Activated CD4-positive, alpha-beta T cell treated with anti-CD3 and anti-CD28 coated beads for 36 hours (primary cell): ENCODE measurements at regions of chr7 and their contacts with region 1.

Region 1: GRCh38 chr7:75914730-75915585 is at the start of gene POR:
- DNase-seq: peak; percentile 97
- ATAC-seq: peak; percentile 89
- H3K4me3 Mint-ChIP-seq: peak within 1 kb of the TSS; percentile 80
- H3K27ac Mint-ChIP-seq: peak within 1 kb of the TSS; percentile 81
- H3K4me1 Mint-ChIP-seq: peaks cover 27% of the 10 kb centered on the region
- H3K27me3 Mint-ChIP-seq: no peaks in the 10 kb centered on the region
- total RNA-seq, gene POR: 24.9 to 33.8 TPM

Region 2: DNA sequence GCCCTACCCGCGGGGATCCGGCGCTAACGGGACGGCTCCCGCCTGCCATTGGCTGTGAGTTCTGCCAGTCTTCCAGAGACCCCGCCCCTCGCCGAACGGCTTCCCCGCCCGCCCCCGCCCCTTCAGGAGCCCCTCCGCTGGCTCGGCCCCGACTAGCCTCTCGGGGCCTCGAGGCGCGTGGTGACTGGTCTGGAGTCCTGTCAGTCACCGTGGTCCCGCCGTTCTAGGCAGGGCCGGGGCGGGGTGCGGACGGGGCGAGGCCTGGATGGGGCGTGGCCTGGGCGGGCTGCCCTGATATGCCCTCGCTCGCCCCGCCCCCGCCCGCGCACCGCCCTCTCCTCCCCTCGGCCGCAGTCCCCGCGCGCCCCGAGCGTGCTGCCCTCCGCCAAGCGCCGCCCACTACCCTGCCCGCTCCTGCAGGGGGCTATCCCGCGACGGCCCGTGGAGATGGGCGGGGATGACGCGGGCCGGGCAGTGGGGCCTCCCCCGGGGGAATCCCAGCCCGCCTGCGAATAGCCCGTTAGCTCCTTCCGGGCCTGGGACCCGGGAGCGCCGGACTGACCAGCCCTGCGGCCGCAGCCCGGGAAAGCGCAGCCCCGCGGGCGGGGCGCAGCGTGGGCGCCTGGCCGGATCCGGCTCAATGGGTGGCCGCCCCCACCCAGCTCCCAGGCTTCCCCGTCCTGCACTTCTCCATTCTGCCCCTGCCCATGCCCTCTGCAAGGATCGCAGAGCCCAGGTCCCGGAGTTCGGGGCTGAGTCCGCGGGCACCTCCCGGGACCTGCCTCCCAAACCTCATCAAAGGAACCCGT is 175.8 kb before region 1 on chr7:
- CTCF ChIA-PET with region 1: no interaction called
- POLR2A ChIA-PET with region 1: no interaction called
- intact Hi-C with region 1: loop called in 1 of 2 experiments (anchors 1 kb)
- DNase-seq: peak; percentile 100
- ATAC-seq: peak; percentile 99
- H3K4me3 Mint-ChIP-seq: peak overlapping the region; percentile 85
- H3K27ac Mint-ChIP-seq: peak overlapping the region; percentile 91
- H3K4me1 Mint-ChIP-seq: peaks cover 19% of the 10 kb centered on the region
- H3K27me3 Mint-ChIP-seq: peaks cover 10% of the 10 kb centered on the region

Region 3: DNA sequence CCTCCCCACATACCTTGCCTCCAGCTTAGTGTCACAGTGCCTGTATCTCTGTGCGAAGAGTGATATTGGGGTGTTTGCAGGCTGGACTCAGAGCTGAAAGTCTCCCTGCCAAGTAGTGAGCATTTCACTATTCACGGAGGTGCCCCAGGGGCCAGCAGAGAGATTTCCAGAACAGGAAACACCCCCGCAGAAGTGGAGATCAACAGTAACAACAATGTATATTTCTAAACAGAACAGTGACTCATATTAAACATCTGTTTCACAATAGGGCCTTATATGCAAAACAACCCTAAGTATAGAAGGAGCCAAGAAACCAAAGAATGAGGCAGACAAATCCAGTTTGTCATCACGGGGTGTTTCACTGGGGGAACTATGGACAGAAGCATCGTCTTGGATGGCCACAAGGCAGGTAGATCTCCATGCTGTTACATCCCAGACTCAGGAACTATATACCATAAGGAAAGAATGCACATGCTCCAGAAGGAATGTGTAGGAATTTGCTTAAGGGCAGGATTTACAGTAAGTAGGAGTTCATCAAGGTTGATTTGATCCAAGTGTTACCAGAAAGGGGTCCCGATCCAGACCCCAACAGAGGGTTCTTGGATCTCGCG is 72.0 kb before region 1 on chr7:
- CTCF ChIA-PET with region 1: no interaction called
- POLR2A ChIA-PET with region 1: no interaction called
- intact Hi-C with region 1: loop called in 1 of 2 experiments (anchors 2 kb)
- DNase-seq: peak; percentile 74
- ATAC-seq: peak; percentile 95
- H3K4me3 Mint-ChIP-seq: peak overlapping the region; percentile 32
- H3K27ac Mint-ChIP-seq: peak overlapping the region; percentile 87
- H3K4me1 Mint-ChIP-seq: peaks cover 14% of the 10 kb centered on the region
- H3K27me3 Mint-ChIP-seq: no peaks in the 10 kb centered on the region

Region 4: GRCh38 chr7:75878769-75879611 is 36.0 kb before region 1 on chr7 and contains the start of gene RHBDD2:
- CTCF ChIA-PET with region 1: no interaction called
- POLR2A ChIA-PET with region 1: interaction called, 6 read pairs
- intact Hi-C with region 1: loop called (anchors 1 kb)
- DNase-seq: peak; percentile 99
- ATAC-seq: peak; percentile 97
- H3K4me3 Mint-ChIP-seq: peak within 1 kb of the TSS; percentile 100
- H3K27ac Mint-ChIP-seq: peak within 1 kb of the TSS; percentile 97
- H3K4me1 Mint-ChIP-seq: peaks cover 34% of the 10 kb centered on the region
- H3K27me3 Mint-ChIP-seq: no peaks in the 10 kb centered on the region
- total RNA-seq, gene RHBDD2: 21.6 to 23.2 TPM

Region 5: GRCh38 chr7:76011442-76011861 is 96.5 kb after region 1 on chr7:
- CTCF ChIA-PET with region 1: no interaction called
- POLR2A ChIA-PET with region 1: interaction called, 3 read pairs
- intact Hi-C with region 1: loop called in 1 of 2 experiments (anchors 1 kb)
- DNase-seq: no peak
- ATAC-seq: no peak
- H3K4me3 Mint-ChIP-seq: no peak overlapping the region
- H3K27ac Mint-ChIP-seq: no peak overlapping the region
- H3K4me1 Mint-ChIP-seq: peaks cover 34% of the 10 kb centered on the region
- H3K27me3 Mint-ChIP-seq: peaks cover 3% of the 10 kb centered on the region

Region 6: DNA sequence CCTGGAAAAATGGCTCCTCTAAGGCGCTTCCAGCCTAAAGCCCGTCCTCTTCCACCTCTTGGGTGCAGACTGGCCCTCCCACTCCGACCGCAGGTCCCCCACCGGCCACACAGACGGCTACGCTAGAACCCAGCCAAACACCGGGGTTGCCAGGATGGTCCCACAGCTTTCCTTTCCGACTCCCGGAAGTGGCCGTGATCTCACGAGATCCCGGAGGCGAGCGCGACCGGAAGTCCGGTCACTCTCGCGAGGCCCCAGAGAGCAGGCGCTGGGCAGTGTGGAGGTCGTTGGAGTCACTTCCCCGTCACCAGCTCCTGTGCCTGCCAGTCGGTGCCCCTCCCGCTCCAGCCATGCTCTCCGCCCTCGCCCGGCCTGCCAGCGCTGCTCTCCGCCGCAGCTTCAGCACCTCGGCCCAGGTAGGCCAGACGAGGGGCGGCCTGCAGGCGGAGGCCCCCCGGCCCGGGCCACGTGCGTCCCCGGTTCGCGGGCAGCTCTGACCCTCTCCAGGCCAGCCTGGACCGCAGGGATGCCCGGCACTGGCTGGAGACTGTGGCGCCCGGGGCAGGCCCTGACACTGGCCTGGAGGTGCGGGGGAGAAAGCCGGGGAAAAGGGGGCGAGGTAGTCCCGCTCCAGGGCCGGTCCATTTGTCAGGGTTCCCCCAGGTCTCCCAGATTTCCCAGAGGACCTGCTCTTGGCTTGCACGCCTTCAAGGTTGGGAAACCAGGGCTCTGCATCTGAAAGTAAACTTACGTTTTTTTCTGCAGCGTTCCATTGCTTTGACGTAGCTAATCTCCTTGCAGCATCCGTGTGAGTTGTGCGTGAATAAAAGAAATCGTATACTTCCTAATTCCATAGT is 133.1 kb after region 1 on chr7 and contains the starts of genes MDH2 and STYXL1:
- CTCF ChIA-PET with region 1: no interaction called
- POLR2A ChIA-PET with region 1: interaction called, 3 read pairs
- intact Hi-C with region 1: loop called in 1 of 2 experiments (anchors 1 kb)
- DNase-seq: peak; percentile 95
- ATAC-seq: peak; percentile 96
- H3K4me3 Mint-ChIP-seq: peak within 1 kb of the TSS; percentile 92
- H3K27ac Mint-ChIP-seq: peak within 1 kb of the TSS; percentile 97
- H3K4me1 Mint-ChIP-seq: peaks cover 43% of the 10 kb centered on the region
- H3K27me3 Mint-ChIP-seq: no peaks in the 10 kb centered on the region
- total RNA-seq, gene MDH2: 257 to 328 TPM
- total RNA-seq, gene STYXL1: 47.5 to 50.5 TPM

Region 7: GRCh38 chr7:76179686-76180085 is 264.7 kb after region 1 on chr7:
- CTCF ChIA-PET with region 1: no interaction called
- POLR2A ChIA-PET with region 1: no interaction called
- intact Hi-C with region 1: no loop called
- DNase-seq: no peak
- ATAC-seq: no peak
- H3K4me3 Mint-ChIP-seq: no peak overlapping the region
- H3K27ac Mint-ChIP-seq: no peak overlapping the region
- H3K4me1 Mint-ChIP-seq: no peaks in the 10 kb centered on the region
- H3K27me3 Mint-ChIP-seq: no peaks in the 10 kb centered on the region

Region 8: DNA sequence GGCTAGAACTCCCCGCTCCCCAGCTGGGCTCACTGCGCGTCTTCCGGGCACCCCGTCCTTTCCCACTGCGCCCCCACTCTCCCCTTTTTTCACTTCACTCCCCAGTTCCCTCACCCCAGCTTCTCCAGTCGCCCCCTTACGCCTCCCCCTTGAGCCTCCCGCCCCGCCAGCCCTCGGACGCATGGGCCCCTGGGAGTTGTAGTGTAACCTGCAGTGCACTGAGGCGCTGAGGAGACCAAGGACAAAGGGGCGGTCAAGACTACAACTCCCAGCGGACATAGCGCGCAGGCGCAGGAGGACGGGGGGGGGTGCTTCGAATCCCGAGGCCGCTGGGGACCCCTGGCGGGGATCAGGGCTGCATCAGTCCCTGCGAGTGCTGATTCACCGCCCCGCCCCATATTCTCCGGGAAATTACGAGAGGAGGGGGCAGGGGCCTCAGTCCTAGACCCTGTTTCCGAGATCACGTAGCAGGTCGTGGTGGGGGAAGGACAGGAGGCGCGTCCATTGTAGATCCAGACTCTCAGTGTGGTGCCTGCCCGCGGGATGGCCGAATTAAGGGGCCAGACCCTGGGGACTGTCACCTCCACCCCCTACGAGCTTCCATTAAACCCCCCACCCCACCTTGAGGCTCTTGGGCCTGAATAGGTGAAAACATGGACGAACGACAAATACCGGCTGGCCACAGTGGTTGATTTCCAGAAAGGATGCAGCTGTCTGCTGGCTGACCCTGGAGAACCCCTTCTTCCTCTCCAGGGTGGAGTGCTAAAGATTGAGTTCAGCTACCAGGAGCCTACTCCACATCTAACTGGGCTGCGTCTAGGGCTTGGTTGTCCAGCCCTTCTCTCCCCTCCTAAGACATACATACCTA is 444.4 kb after region 1 on chr7:
- CTCF ChIA-PET with region 1: no interaction called
- POLR2A ChIA-PET with region 1: no interaction called
- intact Hi-C with region 1: loop called in 1 of 2 experiments (anchors 1 kb)
- DNase-seq: peak; percentile 98
- ATAC-seq: peak; percentile 96
- H3K4me3 Mint-ChIP-seq: peak overlapping the region; percentile 99
- H3K27ac Mint-ChIP-seq: peak overlapping the region; percentile 96
- H3K4me1 Mint-ChIP-seq: peaks cover 41% of the 10 kb centered on the region
- H3K27me3 Mint-ChIP-seq: no peaks in the 10 kb centered on the region